ENCODE measurements at regions of chr12 and their contacts with region 1.

Region 1: DNA sequence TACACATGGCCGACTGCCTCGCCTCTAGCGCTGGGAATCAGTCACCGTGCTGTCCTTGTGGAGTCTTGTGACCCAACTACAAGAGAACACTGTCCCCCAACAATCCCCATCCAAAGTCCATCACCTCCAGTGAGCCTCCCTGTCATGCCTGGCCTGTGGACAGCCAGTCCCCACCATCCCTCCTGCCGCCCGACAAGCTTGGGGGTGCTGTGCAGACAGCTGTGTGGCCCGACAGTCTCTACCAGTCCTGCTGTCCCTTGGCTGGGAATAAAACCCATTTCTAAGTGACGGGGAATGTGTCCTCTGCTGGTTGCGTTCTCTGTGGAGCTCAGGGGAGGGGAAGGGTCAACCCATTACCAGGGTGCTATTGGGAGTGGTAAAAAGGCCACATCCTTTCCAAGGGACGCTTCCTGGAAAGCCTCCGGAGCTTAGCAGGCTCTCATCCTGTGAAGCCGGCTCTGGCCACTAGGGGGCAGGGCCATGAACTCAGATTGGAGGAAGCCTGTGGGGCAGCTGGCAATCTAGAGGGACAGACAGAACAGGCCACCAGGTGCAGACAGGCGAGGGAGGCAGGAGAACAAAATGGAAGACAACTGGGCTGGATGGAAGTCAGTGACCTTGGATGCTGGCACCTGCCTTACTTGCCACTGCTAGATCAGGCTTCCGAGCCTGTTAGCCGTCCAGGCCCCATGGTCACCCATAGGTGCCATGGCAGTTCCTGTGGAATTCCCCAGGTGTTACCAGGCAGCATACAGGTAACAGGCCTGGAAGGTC is 12.0 kb upstream of the BLTP3B start:
- DNase-seq: peak; percentile 79
- H3K4me3 Mint-ChIP-seq: no peak overlapping the region
- H3K27ac Mint-ChIP-seq: no peak overlapping the region
- H3K4me1 Mint-ChIP-seq: peaks cover 6% of the 10 kb centered on the region
- H3K27me3 Mint-ChIP-seq: no peaks in the 10 kb centered on the region

Region 2: DNA sequence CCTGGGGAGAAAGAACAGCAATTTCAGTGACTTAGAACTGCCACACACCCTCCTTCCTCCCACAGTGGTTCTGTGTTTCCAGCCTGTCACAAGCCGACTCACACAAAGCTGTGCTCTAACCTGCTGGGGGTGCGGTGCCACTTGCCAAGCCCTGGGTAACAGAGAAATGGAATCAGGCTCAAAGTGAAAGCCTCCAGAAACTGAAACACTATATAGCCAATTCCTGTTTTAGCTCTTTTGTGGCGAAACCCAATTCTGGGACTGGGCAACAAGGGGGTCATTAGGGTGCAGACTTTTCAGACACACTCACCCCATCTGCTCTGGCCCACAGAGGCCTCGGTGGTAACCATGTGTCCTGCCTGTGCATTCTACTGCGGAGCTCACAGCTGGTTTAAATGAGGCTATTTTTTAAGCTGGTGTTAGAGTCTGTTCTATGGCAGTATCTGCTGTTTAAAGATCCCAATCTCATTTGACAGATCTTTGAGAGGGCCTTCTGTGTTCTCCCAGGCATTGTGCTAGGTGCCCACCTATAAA is 30.8 kb after region 1 on chr12:
- CTCF ChIA-PET with region 1: interaction called, 11 read pairs
- intact Hi-C with region 1: no loop called
- DNase-seq: no peak
- H3K4me3 Mint-ChIP-seq: no peak overlapping the region
- H3K27ac Mint-ChIP-seq: no peak overlapping the region
- H3K4me1 Mint-ChIP-seq: peaks cover 6% of the 10 kb centered on the region
- H3K27me3 Mint-ChIP-seq: no peaks in the 10 kb centered on the region

Region 3: DNA sequence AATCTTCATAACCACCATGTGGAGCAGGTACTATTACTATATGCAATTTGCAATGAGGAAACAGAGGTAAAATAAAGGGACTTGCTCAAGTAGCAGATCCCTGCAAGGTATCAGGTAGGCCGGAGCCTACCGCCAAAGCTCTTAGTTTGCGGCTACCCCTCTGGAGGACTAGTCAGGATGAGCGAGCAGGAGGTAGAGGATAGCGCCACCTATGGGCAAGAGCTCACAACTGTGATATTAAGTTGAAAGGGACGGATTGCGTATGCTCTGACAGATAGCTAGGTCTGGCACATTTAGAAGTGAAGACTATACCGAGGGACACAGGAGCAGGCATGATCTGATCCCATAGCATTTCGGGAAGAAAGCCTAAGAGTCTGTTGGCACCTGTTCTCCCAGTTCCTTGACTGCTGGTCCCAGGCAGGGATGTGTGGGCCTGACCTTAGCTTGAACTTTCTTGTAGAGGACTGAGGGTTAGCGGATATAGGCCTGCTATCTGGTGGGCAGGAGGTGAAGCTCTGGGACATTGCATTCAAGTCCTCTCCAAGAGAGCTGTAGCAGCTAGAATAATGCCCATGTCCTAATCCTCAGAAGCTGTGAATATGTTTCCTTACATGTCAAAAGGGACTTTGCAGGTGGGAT is 250.2 kb after region 1 on chr12:
- CTCF ChIA-PET with region 1: interaction called, 4 read pairs
- intact Hi-C with region 1: loop called (anchors 2 kb)
- DNase-seq: peak; percentile 63
- H3K4me3 Mint-ChIP-seq: no peak overlapping the region
- H3K27ac Mint-ChIP-seq: no peak overlapping the region
- H3K4me1 Mint-ChIP-seq: no peaks in the 10 kb centered on the region
- H3K27me3 Mint-ChIP-seq: peaks cover 9% of the 10 kb centered on the region